ENCODE measurements at regions of chr2 and their contacts with region 1.

Region 1: GRCh38 chr2:144516981-144517865 is 2.7 kb downstream of the ZEB2 start:
- DNase-seq: peak; percentile 76
- ATAC-seq: peak; percentile 33 to 68

Region 2: GRCh38 chr2:144215701-144216675 is 301.2 kb before region 1 on chr2:
- intact Hi-C with region 1: no loop called
- DNase-seq: no peak
- ATAC-seq: no peak

Region 3: DNA sequence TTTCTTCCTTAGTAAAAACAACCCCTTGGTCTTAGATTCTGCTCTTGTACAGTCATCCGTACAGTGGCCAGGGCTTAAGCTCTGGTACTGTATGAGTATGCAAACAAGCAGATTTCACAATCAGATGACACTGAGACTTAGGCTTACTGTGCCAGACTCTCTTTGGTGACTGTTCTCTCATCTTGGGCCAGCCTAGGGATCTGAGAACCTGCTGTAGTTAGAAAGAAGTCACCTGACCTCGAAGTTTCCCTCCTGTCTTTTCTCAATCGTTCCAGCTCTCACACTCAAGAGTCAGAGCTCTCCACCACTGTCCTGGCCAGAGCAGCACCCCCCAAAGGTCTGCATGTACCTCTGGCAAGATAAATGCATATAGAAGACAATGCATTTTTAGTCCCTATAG is 60.5 kb before region 1 on chr2:
- intact Hi-C with region 1: loop called in 1 of 2 experiments (anchors 10 kb)
- DNase-seq: peak; percentile 36
- ATAC-seq: peak; percentile 56 to 77

Region 4: GRCh38 chr2:144572977-144573376 is 55.8 kb after region 1 on chr2:
- intact Hi-C with region 1: no loop called
- DNase-seq: no peak
- ATAC-seq: no peak

Region 5: GRCh38 chr2:144886862-144887261 is 369.6 kb after region 1 on chr2:
- intact Hi-C with region 1: loop called in 1 of 2 experiments (anchors 10 kb)
- DNase-seq: peak; percentile 68
- ATAC-seq: peak; percentile 92 to 98

Measured in left cardiac atrium (tissue), 4 donors.